Left ventricle myocardium superior (tissue), 1 donor: ENCODE measurements at regions of chr1 and their contacts with region 1.

Region 1: DNA sequence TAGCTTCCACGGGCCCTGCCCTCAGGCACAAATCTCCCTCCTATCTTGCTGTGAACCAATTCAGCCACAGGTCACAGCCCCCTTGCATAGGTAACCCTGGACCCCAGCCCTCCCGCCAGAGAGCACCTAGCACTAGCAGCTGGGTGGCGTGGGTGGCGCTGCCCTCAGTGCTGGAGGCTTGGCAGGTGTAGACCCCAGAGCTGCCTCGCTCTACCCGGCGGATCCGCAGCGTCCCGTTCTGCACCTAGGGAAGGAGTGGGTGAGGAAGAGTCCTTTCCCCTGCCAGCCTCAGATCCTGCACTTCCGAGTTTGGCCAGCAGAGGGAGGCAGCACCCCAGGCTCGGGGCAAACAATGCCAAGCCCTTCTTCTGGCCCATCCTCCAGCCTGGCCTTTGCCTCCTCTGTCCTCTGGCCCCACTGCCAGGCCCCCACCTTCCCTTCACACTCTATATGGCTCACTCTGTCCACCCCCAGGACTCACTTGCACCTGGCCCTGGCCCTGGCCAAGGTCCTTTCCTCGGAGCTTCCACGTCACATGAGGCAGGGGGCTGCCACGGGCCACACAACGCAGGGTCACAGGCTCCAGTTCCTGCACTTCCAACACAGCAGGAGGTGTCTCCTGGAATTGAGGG is 9.0 kb downstream of the IGSF9 start:
- DNase-seq: peak; percentile 83
- ATAC-seq: peak; percentile 79

Region 2: GRCh38 chr1:160006312-160006940 is 70.0 kb after region 1 on chr1:
- intact Hi-C with region 1: loop called (anchors 10 kb)
- DNase-seq: peak; percentile 84
- ATAC-seq: peak; percentile 79

Region 3: DNA sequence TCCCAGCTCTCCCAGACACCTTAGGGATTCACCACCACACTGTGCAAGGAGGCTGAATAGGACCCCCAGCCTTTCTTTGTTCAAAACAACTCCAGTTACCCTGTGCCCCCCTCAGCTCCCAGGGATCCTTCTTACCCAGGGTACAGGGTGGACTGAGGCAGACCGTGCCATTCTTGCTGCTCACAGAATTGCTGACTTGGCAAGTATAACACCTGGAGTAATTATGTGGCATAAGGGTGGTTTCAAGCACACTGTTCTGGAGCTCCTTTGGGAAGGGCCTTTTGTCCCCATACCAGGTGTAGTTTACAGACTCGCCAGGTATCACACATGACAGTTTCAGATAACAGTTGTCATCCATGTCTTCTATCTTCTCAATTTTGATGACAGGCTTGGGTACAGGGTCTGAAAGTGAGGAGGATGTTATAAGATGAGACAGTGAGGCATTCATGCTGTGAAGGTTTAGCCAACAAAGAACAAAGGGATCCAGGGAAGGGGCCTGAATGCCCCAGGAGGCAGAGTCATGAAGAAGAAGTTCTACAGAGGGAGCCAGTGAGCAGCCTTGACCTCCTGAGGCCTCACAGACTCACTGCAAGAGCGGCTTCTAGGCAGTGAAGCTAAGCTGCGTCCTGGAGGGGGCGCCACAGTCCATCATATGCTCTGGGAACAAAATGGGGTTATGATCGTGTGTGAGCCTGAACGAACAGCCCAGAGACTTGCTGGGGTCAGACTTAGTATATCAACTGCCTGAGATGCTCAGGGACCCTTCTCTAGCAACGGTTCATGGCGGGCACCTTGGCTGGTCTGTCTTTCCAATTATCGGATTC is 744.9 kb after region 1 on chr1:
- intact Hi-C with region 1: no loop called
- DNase-seq: peak; percentile 75
- ATAC-seq: peak; percentile 55